H1 (cell line): ENCODE measurements at regions of chr1 and their contacts with region 1.

Region 1: GRCh38 chr1:41387667-41388091 is 26.4 kb downstream of the FOXO6 start:
- DNase-seq: peak in 1 of 2 experiments; percentile 77
- H3K4me3 ChIP-seq: peak overlapping the region in 1 of 4 experiments; percentile 21; a peak in 1 of 8 replicates
- H3K27ac ChIP-seq: no peak overlapping the region
- H3K4me1 ChIP-seq: peaks cover 6 to 25% (median 15%) of the 10 kb centered on the region in 4 experiments
- H3K27me3 ChIP-seq: peaks cover 3 to 30% (median 21%) of the 10 kb centered on the region in 4 experiments
- CTCF ChIP-seq: no peak
- EP300 ChIP-seq: peak in 1 of 2 experiments; percentile 18; a peak in 1 of 3 replicates
- POLR2A ChIP-seq: no peak
- RAD21 ChIP-seq: peak in 1 of 2 experiments; percentile 22; a peak in 1 of 4 replicates

Region 2: DNA sequence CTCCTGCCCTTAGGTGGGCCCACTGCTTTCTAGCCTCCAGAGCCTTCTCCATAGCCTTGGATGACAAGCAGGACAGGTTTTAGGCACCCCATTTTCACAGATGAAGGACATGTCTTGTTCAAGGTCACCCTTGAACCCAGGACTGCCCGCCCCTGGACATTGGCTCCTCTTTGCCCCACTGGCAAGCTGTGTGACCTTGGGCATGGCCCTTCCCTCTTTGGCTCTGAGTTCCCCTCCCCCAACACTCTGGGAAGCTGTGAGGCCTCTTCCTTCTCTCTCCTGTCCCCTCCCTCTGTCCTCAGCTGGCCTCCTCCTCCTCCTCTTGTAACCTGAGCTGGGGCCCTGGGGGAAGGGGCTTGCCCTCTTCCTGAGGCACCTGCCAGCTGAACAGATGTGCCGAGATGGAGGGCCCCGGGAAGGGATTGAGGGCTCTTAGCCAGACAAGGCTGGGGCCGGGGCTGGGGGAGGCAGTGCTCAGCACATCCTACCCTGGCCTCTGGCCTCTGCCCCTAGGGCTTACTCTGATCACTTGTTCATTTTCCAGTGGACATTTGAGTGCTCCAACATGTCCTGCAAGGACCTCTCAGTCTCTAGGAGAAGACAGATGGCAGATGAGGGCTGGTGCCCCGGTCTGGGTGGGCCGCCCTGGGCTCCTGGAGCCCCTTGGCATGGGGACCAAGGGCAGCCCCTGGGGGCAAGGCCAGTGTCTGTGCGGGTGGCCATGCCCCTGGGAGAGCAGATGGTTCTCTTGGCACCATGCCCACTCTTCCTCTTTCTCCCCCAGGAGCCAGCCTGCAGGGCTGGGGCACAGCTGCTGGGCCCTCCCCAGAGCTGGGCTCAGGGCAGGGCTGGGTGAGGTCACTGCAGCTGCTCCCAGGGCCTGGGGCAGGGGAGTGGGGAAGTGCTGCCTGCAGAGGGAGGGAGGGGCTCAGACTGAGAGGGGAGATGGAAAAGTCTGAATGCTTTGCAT is 15.8 kb before region 1 on chr1:
- CTCF ChIA-PET with region 1: interaction called, 21 read pairs
- POLR2A ChIA-PET with region 1: interaction called, 22 read pairs
- DNase-seq: peak; percentile 80 to 85
- H3K4me3 ChIP-seq: peak overlapping the region in 3 of 4 experiments; percentile 20 to 48 (median 42); a peak in 5 of 8 replicates
- H3K27ac ChIP-seq: no peak overlapping the region; the same call in 1 of the 2 replicates
- H3K4me1 ChIP-seq: peaks cover 15 to 45% (median 34%) of the 10 kb centered on the region in 4 experiments
- H3K27me3 ChIP-seq: peaks cover 0 to 19% (median 7%) of the 10 kb centered on the region in 4 experiments; a peak in 4 of 7 replicates
- CTCF ChIP-seq: no peak
- EP300 ChIP-seq: peak in 1 of 2 experiments; percentile 35; a peak in 1 of 3 replicates
- POLR2A ChIP-seq: no peak
- RAD21 ChIP-seq: peak in 1 of 2 experiments; percentile 4; a peak in 1 of 4 replicates

Region 3: GRCh38 chr1:41698916-41699860 is 311.5 kb after region 1 on chr1:
- CTCF ChIA-PET with region 1: no interaction called
- POLR2A ChIA-PET with region 1: no interaction called
- DNase-seq: no peak
- H3K4me3 ChIP-seq: no peak overlapping the region
- H3K27ac ChIP-seq: no peak overlapping the region
- H3K4me1 ChIP-seq: no peaks in the 10 kb centered on the region
- H3K27me3 ChIP-seq: no peaks in the 10 kb centered on the region
- CTCF ChIP-seq: no peak
- EP300 ChIP-seq: no peak
- POLR2A ChIP-seq: no peak
- RAD21 ChIP-seq: no peak